ENCODE measurements at regions of chr4 and their contacts with region 1.

Region 1: GRCh38 chr4:101347557-101348366 is 436 bp upstream of the PPP3CA start:
- DNase-seq: peak; percentile 99
- ATAC-seq: peak; percentile 95
- H3K4me3 Mint-ChIP-seq: peak overlapping the region; percentile 90
- H3K27ac Mint-ChIP-seq: peak overlapping the region; percentile 77
- H3K4me1 Mint-ChIP-seq: peaks cover 28% of the 10 kb centered on the region
- H3K27me3 Mint-ChIP-seq: peaks cover 22% of the 10 kb centered on the region

Region 2: GRCh38 chr4:99949034-99949998 is 1398.4 kb before region 1 on chr4:
- CTCF ChIA-PET with region 1: no interaction called
- POLR2A ChIA-PET with region 1: no interaction called
- intact Hi-C with region 1: loop called in 1 of 2 experiments (anchors 2 kb)
- DNase-seq: peak; percentile 96
- ATAC-seq: peak; percentile 52
- H3K4me3 Mint-ChIP-seq: no peak overlapping the region
- H3K27ac Mint-ChIP-seq: no peak overlapping the region
- H3K4me1 Mint-ChIP-seq: peaks cover 33% of the 10 kb centered on the region
- H3K27me3 Mint-ChIP-seq: no peaks in the 10 kb centered on the region

Region 3: DNA sequence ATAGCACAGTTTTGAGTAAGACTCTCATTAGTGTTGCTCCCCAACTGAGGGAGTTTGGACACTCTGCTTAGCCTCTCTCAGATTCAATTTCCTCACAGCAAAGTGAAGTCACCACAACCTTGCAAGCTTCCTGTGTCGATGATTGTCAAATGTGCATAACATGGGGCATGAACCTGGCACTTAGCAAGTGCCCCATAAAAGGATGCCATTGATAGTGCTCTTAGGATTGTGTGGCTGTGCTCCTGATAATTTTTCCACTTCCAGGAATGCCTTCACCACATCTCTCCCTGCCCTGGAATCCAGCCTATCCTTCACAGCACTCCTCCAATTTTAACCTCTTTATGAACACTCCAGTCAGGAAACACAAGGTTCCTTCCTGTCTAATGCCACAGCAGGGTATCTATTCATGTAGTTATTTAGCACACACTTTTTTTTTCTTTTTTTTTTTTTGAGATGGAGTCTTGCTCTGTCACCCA is 309.8 kb before region 1 on chr4:
- CTCF ChIA-PET with region 1: no interaction called
- POLR2A ChIA-PET with region 1: no interaction called
- intact Hi-C with region 1: loop called in 1 of 2 experiments (anchors 5 kb)
- DNase-seq: peak; percentile 23
- ATAC-seq: peak; percentile 67
- H3K4me3 Mint-ChIP-seq: no peak overlapping the region
- H3K27ac Mint-ChIP-seq: no peak overlapping the region
- H3K4me1 Mint-ChIP-seq: peaks cover 24% of the 10 kb centered on the region
- H3K27me3 Mint-ChIP-seq: no peaks in the 10 kb centered on the region

Region 4: GRCh38 chr4:101205916-101206315 is 141.8 kb before region 1 on chr4:
- CTCF ChIA-PET with region 1: no interaction called
- POLR2A ChIA-PET with region 1: no interaction called
- intact Hi-C with region 1: loop called in 1 of 2 experiments (anchors 5 kb)
- DNase-seq: peak; percentile 57
- ATAC-seq: peak; percentile 99
- H3K4me3 Mint-ChIP-seq: no peak overlapping the region
- H3K27ac Mint-ChIP-seq: no peak overlapping the region
- H3K4me1 Mint-ChIP-seq: peaks cover 29% of the 10 kb centered on the region
- H3K27me3 Mint-ChIP-seq: peaks cover 2% of the 10 kb centered on the region

Region 5: GRCh38 chr4:101419324-101420135 is 71.8 kb after region 1 on chr4:
- CTCF ChIA-PET with region 1: no interaction called
- POLR2A ChIA-PET with region 1: no interaction called
- intact Hi-C with region 1: loop called (anchors 1 to 2 kb)
- DNase-seq: peak; percentile 8
- ATAC-seq: peak; percentile 63
- H3K4me3 Mint-ChIP-seq: no peak overlapping the region
- H3K27ac Mint-ChIP-seq: no peak overlapping the region
- H3K4me1 Mint-ChIP-seq: peaks cover 39% of the 10 kb centered on the region
- H3K27me3 Mint-ChIP-seq: peaks cover 41% of the 10 kb centered on the region

Region 6: DNA sequence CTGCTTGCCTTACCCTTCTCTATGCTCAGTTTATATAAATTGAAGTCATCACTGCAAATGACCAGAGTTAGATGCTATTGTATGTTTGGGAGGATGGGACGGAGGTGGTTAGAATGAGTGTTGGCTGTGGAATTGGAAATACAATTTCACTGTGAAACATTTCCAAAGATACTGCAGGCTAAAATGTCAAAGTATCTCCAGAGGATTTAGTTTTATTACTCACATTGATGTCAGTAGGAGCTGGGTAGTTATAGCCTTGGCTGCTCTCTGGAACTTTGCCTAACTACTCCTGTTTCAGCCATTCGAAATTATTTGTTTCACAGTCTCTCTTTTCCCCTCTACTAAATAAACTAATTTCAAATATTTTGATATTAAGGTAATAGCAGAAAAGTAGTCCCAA is 92.2 kb after region 1 on chr4:
- CTCF ChIA-PET with region 1: no interaction called
- POLR2A ChIA-PET with region 1: no interaction called
- intact Hi-C with region 1: no loop called
- DNase-seq: no peak
- ATAC-seq: no peak
- H3K4me3 Mint-ChIP-seq: no peak overlapping the region
- H3K27ac Mint-ChIP-seq: no peak overlapping the region
- H3K4me1 Mint-ChIP-seq: no peaks in the 10 kb centered on the region
- H3K27me3 Mint-ChIP-seq: peaks cover 9% of the 10 kb centered on the region

Region 7: GRCh38 chr4:101643186-101643837 is 295.6 kb after region 1 on chr4:
- CTCF ChIA-PET with region 1: no interaction called
- POLR2A ChIA-PET with region 1: no interaction called
- intact Hi-C with region 1: no loop called
- DNase-seq: no peak
- ATAC-seq: no peak
- H3K4me3 Mint-ChIP-seq: no peak overlapping the region
- H3K27ac Mint-ChIP-seq: no peak overlapping the region
- H3K4me1 Mint-ChIP-seq: no peaks in the 10 kb centered on the region
- H3K27me3 Mint-ChIP-seq: peaks cover 7% of the 10 kb centered on the region

Region 8: GRCh38 chr4:102344954-102345794 is 997.4 kb after region 1 on chr4 and contains the start of gene SLC39A8:
- CTCF ChIA-PET with region 1: no interaction called
- POLR2A ChIA-PET with region 1: no interaction called
- intact Hi-C with region 1: loop called in 1 of 2 experiments (anchors 1 kb)
- DNase-seq: peak; percentile 95
- ATAC-seq: peak; percentile 83
- H3K4me3 Mint-ChIP-seq: peak within 1 kb of the TSS; percentile 86
- H3K27ac Mint-ChIP-seq: peak within 1 kb of the TSS; percentile 99
- H3K4me1 Mint-ChIP-seq: peaks cover 42% of the 10 kb centered on the region
- H3K27me3 Mint-ChIP-seq: no peaks in the 10 kb centered on the region
- total RNA-seq, gene SLC39A8: 46.9 to 53.5 TPM

Region 9: DNA sequence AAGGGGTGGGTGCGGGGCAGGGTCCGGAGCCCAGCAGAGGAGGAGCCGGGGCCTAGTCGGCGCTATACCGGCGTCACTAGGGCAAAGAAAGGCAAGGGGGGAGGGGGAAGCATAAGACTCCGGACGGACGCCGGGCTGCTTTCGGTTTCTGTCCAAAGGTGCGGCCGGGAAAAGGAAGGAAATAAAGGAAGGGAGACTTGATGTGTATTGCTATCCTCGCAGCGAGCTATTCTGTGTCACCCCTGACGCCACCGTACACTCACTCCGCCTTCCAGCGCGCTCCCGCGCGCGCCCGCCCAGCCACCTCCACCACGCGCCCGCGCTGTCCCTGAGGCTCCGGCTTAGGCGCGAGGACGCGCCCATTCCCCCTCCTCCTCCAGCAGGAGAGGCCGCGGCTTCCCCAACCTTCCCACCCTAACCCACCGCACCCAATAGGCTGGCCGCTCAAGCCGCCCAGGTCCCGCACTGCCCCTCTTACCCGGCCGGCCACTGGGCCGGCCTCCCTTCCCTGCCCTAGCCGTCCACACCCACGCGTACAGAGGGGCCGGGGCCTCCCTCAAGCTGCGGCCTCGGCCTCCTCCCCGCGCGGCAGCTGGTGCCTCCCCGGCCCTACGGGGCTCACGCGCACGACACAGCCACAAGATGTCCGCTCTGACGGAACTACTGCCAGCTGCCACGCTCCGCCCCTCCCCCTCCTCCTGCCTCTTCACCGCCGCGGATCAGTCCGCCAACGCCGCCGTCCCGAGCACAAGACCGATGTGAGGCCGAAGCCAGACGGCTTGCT is 1479.3 kb after region 1 on chr4 and contains the start of gene UBE2D3:
- CTCF ChIA-PET with region 1: no interaction called
- POLR2A ChIA-PET with region 1: no interaction called
- intact Hi-C with region 1: loop called in 1 of 2 experiments (anchors 5 kb)
- DNase-seq: peak; percentile 97
- ATAC-seq: peak; percentile 46
- H3K4me3 Mint-ChIP-seq: no peak within 1 kb of the TSS
- H3K27ac Mint-ChIP-seq: no peak within 1 kb of the TSS
- H3K4me1 Mint-ChIP-seq: peaks cover 23% of the 10 kb centered on the region
- H3K27me3 Mint-ChIP-seq: no peaks in the 10 kb centered on the region
- total RNA-seq, gene UBE2D3: 472 to 686 TPM